ENCODE measurements at regions of chr6 and their contacts with region 1.

Region 1: DNA sequence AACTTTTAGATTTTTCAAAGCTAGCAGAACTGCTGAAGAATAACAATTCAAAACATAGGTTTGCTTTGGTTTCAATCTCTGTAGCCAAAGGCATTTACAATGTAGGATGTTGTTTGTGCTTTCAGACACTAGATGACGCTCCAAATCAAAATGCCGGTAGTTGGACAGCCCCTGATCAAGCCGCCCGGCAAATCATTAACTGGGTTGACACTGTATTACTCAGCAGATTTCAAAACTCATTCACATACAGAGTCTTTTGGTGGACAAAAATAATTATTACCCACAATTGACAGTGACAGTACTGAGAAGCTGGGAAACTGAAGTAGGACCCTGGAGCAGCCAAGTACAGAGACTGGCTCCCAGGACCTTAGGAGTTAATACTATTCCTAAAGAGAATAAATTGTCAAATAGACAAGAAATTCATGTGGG is 21.3 kb upstream of the HFE start:
- DNase-seq: peak; percentile 96
- ATAC-seq: peak; percentile 94
- H3K4me3 ChIP-seq: peak overlapping the region; percentile 12 to 40 (median 16); a peak in 3 of 6 replicates
- H3K27ac ChIP-seq: peak overlapping the region; percentile 71
- H3K4me1 ChIP-seq: peaks cover 22% of the 10 kb centered on the region
- H3K27me3 ChIP-seq: no peaks in the 10 kb centered on the region
- CTCF ChIP-seq: peak; percentile 92
- EP300 ChIP-seq: peak in 1 of 2 experiments; percentile 59; a peak in 1 of 4 replicates
- POLR2A ChIP-seq: no peak
- RAD21 ChIP-seq: peak; percentile 95

Region 2: DNA sequence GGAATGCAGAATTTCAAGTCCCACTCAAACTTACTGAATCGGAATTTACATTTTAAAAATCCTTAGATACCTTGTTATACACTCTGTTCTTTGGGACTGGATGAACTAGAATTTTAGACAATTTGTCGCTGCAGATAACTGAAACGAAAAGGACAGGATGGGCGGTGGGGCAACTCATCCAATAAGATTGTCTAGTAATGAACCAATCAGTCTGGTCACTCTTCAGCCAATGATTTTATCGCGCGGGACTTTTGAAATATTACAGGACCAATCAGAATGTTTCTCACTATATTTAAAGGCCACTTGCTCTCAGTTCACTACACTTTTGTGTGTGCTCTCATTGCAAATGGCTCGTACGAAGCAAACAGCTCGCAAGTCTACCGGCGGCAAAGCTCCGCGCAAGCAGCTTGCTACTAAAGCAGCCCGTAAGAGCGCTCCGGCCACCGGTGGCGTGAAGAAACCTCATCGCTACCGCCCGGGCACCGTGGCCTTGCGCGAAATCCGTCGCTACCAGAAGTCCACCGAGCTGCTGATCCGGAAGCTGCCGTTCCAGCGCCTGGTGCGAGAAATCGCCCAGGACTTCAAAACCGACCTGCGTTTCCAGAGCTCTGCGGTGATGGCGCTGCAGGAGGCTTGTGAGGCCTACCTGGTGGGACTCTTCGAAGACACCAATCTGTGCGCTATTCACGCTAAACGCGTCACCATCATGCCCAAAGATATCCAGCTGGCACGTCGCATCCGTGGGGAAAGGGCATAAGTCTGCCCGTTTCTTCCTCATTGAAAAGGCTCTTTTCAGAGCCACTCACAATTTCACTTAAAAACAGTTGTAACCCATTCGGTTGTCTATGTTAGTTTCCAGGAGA is 20.7 kb before region 1 on chr6:
- CTCF ChIA-PET with region 1: no interaction called
- POLR2A ChIA-PET with region 1: interaction called, 12 read pairs
- in situ Hi-C with region 1: no loop called
- intact Hi-C with region 1: no loop called
- DNase-seq: peak; percentile 99
- ATAC-seq: peak; percentile 74
- H3K4me3 ChIP-seq: peak overlapping the region; percentile 58 to 73 (median 63)
- H3K27ac ChIP-seq: peak overlapping the region; percentile 94
- H3K4me1 ChIP-seq: peaks cover 31% of the 10 kb centered on the region
- H3K27me3 ChIP-seq: no peaks in the 10 kb centered on the region; a peak in 1 of 5 replicates
- CTCF ChIP-seq: peak; percentile 62
- EP300 ChIP-seq: peak in 1 of 2 experiments; percentile 44; a peak in 2 of 4 replicates
- POLR2A ChIP-seq: peak; percentile 98 to 100
- RAD21 ChIP-seq: peak; percentile 69

Region 3: DNA sequence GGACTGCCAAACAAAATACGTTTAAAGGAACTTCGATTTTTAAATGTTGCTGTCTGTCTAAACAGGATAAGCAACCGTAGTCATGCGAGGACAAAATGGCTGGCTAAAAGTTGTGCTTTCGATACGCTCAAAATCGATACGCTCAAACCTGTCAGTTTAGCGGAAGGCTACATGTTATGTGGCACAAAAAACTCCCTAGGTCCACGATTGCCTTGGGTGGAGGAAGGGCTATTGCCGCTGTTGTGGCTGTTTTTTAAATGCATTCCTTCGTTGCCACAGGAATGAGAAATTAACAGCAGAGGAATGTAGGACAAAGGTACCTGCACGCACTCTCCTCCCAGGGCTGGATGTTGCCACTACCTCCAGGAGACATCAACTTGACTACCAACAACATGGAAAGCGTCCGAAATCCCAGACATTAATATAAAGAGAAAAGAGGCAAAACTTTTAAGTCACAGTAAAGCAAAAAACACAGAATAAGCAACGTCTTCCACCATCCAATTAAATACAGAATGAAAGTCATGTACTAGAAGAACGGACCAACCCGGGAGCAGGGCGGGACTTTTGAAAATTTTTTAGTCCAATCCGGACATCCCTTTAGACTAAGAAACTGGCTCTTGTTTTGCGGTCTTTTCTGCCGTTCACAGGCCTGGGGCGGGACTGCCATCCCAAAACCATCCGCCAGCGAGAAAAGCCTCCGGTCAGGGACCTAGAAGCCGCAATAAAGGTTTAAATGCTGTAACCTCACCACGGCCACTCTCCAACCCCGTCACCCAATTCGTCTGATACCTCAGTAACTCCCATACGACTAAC is 10.9 kb before region 1 on chr6:
- CTCF ChIA-PET with region 1: no interaction called
- POLR2A ChIA-PET with region 1: interaction called, 3 read pairs
- in situ Hi-C with region 1: no loop called
- intact Hi-C with region 1: loop called (anchors 1 kb)
- DNase-seq: peak; percentile 97
- ATAC-seq: peak; percentile 82
- H3K4me3 ChIP-seq: peak overlapping the region; percentile 69 to 85 (median 85)
- H3K27ac ChIP-seq: peak overlapping the region; percentile 90
- H3K4me1 ChIP-seq: peaks cover 26% of the 10 kb centered on the region
- H3K27me3 ChIP-seq: no peaks in the 10 kb centered on the region; a peak in 1 of 5 replicates
- CTCF ChIP-seq: peak; percentile 32; the same call in 1 of the 2 replicates
- EP300 ChIP-seq: peak in 1 of 2 experiments; percentile 27; a peak in 1 of 4 replicates
- POLR2A ChIP-seq: peak; percentile 79 to 98; a peak in 3 of 4 replicates
- RAD21 ChIP-seq: peak; percentile 50

Region 4: GRCh38 chr6:26087284-26088115 is 21.5 kb after region 1 on chr6 and contains the start of gene HFE:
- CTCF ChIA-PET with region 1: interaction called, 4 read pairs
- POLR2A ChIA-PET with region 1: interaction called, 11 read pairs
- in situ Hi-C with region 1: no loop called
- intact Hi-C with region 1: no loop called
- DNase-seq: peak; percentile 55
- ATAC-seq: peak; percentile 86
- H3K4me3 ChIP-seq: peak within 1 kb of the TSS; percentile 79 to 84 (median 84)
- H3K27ac ChIP-seq: peak within 1 kb of the TSS; percentile 72
- H3K4me1 ChIP-seq: peaks cover 31% of the 10 kb centered on the region
- H3K27me3 ChIP-seq: no peaks in the 10 kb centered on the region
- CTCF ChIP-seq: peak; percentile 24; the same call in 1 of the 2 replicates
- EP300 ChIP-seq: no peak
- POLR2A ChIP-seq: peak; percentile 20 to 55; a peak in 2 of 4 replicates
- RAD21 ChIP-seq: peak; percentile 9; the same call in 1 of the 2 replicates
- total RNA-seq, gene HFE: 1.9 and 3.7 TPM in 2 replicates

Region 5: GRCh38 chr6:26097268-26097875 is 31.4 kb after region 1 on chr6:
- CTCF ChIA-PET with region 1: interaction called, 208 read pairs
- POLR2A ChIA-PET with region 1: interaction called, 6 read pairs
- in situ Hi-C with region 1: loop called (anchors 5 kb)
- intact Hi-C with region 1: loop called (anchors 1 kb)
- DNase-seq: peak; percentile 75
- ATAC-seq: peak; percentile 93
- H3K4me3 ChIP-seq: no peak overlapping the region
- H3K27ac ChIP-seq: no peak overlapping the region
- H3K4me1 ChIP-seq: peaks cover 1% of the 10 kb centered on the region
- H3K27me3 ChIP-seq: no peaks in the 10 kb centered on the region
- CTCF ChIP-seq: peak; percentile 86
- EP300 ChIP-seq: no peak
- POLR2A ChIP-seq: no peak
- RAD21 ChIP-seq: peak; percentile 82

Region 6: DNA sequence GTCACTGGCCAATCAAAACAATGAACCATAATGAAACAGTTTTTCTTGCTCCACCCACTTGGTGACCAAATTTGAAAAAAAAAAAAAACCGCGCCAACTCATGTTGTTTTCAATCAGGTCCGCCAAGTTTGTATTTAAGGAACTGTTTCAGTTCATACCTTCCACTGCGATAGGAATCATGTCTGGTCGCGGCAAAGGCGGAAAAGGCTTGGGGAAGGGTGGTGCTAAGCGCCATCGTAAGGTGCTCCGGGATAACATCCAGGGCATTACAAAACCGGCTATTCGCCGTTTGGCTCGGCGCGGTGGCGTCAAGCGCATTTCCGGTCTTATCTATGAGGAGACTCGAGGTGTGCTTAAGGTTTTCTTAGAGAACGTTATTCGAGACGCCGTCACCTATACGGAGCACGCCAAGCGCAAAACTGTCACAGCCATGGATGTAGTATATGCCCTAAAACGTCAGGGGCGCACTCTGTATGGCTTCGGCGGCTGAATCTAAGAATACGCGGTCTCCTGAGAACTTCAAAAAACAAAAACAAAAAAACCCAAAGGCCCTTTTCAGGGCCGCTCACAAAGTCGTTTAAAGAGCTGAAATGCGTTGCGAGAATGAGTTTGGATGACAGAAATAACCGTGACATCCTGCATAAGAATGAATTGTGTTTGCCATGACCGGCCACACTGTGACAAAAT is 37.9 kb after region 1 on chr6:
- CTCF ChIA-PET with region 1: interaction called, 208 read pairs
- POLR2A ChIA-PET with region 1: interaction called, 6 read pairs
- in situ Hi-C with region 1: loop called (anchors 5 kb)
- intact Hi-C with region 1: no loop called
- DNase-seq: peak; percentile 96
- ATAC-seq: peak; percentile 84
- H3K4me3 ChIP-seq: peak overlapping the region; percentile 64 to 79 (median 74)
- H3K27ac ChIP-seq: peak overlapping the region; percentile 92
- H3K4me1 ChIP-seq: peaks cover 29% of the 10 kb centered on the region
- H3K27me3 ChIP-seq: no peaks in the 10 kb centered on the region; a peak in 1 of 5 replicates
- CTCF ChIP-seq: peak; percentile 45
- EP300 ChIP-seq: peak; percentile 69 to 96; a peak in 3 of 4 replicates
- POLR2A ChIP-seq: peak; percentile 98 to 99
- RAD21 ChIP-seq: peak; percentile 52; the same call in 1 of the 2 replicates

Region 7: DNA sequence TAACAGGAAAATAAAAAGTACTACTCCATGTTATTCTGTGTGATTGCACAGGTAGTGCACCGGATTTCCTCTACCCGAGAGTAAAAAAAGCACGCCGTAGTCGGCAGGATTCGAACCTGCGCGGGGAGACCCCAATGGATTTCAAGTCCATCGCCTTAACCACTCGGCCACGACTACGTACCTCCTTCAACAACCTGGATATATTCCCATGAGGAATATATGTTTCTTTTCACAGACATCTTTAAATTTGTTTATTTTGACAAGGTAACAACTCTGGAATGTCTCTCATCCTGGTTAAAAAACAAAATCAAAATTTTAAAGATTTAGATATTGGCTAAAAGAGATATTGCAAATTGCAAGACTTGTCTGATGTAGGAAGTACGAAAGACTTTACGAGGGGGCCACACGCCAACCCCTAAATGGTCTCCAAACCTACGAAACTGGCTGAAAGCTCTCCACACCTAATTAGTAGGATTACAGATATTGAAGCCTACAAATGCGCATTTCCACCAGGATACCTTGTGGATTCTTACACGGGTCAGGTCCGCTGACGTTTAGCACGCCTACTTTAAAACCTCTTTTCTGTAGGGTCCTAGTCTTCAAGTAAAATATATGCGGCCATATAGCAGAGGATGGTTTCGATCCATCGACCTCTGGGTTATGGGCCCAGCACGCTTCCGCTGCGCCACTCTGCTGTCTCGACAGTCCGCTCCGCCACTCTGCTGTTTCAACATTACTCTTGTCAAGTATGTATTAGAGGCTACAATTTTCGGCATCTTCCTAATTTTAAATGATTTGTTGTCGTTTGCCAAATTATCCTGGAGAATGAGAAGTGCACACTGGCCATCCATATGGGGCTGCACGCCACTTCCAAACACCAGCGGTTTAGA is 246.8 kb after region 1 on chr6:
- CTCF ChIA-PET with region 1: no interaction called
- POLR2A ChIA-PET with region 1: no interaction called
- in situ Hi-C with region 1: no loop called
- intact Hi-C with region 1: loop called (anchors 10 kb)
- DNase-seq: peak; percentile 92
- ATAC-seq: peak; percentile 77
- H3K4me3 ChIP-seq: peak overlapping the region; percentile 67 to 80 (median 67)
- H3K27ac ChIP-seq: peak overlapping the region; percentile 55
- H3K4me1 ChIP-seq: peaks cover 72% of the 10 kb centered on the region
- H3K27me3 ChIP-seq: no peaks in the 10 kb centered on the region
- CTCF ChIP-seq: no peak
- EP300 ChIP-seq: peak in 1 of 2 experiments; percentile 68; a peak in 2 of 4 replicates
- POLR2A ChIP-seq: no peak
- RAD21 ChIP-seq: no peak